ENCODE measurements at regions of chr14 and their contacts with region 1.

Region 1: DNA sequence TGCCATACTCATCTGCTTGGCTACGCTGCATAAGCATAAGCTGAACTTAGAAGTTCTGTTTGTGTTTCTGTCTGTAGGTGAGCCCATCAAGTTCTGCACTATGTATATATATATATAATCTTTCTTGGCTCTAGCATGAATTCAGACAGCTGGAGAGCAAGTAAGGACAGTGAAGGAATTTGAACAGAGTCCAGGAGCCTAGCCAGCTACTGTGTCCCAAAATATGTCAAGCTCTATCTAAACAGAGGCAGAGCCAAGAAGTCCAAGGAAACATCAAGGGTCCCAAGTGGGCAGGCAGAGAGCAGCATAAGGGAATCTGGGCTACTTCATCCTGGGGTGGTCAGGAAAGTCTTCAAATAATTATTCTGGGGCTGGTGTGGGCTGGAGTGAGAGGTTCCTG is 118.5 kb upstream of the NPAS3 start:
- DNase-seq: no peak
- H3K4me3 ChIP-seq: no peak overlapping the region
- H3K27ac ChIP-seq: peak overlapping the region in 27 of 59 donors; percentile 0 to 60 (median 32)
- H3K27me3 ChIP-seq: no peaks in the 10 kb centered on the region
- CTCF ChIP-seq: no peak

Region 2: DNA sequence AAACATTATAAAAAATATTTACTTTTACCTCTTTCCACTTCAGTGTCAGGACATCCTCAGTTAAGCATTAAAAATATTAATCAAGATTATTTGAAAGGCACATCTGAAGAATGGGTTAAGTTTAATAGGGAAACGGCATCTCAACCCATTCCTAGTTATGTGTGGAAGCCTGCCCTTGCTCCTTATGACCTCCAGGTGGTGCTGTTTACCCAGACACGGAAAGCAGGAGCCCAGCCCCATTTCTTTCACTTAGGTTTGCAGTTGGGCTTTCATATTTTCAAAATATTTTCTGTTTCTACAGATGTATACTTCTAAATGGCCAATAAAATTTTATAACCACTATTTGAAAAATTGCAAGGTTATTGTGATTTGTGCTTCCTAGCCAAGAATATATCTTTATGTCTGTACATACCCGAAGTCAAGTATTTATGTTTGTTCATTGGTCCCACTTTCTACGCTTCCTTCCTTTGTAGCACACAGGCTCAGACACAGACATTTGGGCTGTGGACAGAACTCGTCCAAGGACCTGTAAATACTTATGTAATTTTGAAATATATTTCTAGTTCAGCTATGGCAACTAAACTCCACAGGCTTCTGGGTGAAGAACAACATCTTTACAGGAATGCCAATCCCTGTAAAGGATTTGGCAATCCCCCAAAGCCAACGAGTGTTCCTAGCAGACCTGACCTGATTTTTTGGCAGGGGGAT is 243.9 kb before region 1 on chr14:
- intact Hi-C with region 1: loop called (anchors 5 kb)
- DNase-seq: peak in 9 of 10 donors; percentile 31 to 72 (median 52)
- H3K4me3 ChIP-seq: peak overlapping the region in 36 of 59 donors; percentile 3 to 56 (median 32)
- H3K27ac ChIP-seq: peak overlapping the region in 48 of 59 donors; percentile 1 to 84 (median 60)
- H3K27me3 ChIP-seq: no peaks in the 10 kb centered on the region
- CTCF ChIP-seq: peak; percentile 91 to 99 (median 97)

Region 3: GRCh38 chr14:32710731-32711680 is 109.2 kb before region 1 on chr14:
- intact Hi-C with region 1: loop called in 1 of 2 experiments (anchors 5 kb)
- DNase-seq: peak in 3 of 10 donors; percentile 25 to 62 (median 40)
- H3K4me3 ChIP-seq: peak overlapping the region in 50 of 59 donors; percentile 0 to 56 (median 28)
- H3K27ac ChIP-seq: peak overlapping the region in 58 of 59 donors; percentile 5 to 91 (median 80)
- H3K27me3 ChIP-seq: no peaks in the 10 kb centered on the region
- CTCF ChIP-seq: peak; percentile 54 to 88 (median 72)

Measured in dorsolateral prefrontal cortex (tissue), 120 donors.